ENCODE measurements at regions of chr2 and their contacts with region 1.

Region 1: DNA sequence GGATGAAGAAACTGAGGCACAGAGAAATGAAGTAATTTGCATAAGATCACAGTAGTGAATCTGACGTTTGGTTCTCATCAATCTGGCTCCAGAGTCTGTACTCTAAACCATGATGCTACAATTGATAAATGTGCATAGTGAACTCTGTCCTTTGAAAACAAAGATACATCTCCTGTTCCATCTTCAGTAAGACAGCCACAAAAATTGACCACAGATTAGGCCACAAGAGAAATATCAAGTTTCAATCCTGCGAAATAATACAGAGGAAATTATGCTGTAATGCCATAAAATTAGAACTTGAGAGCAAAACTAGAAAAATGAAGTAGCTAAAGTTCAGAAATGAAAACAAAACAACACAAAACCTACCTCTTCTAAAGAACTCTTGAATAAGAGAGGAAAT is 28.4 kb downstream of the FAM98A start:
- DNase-seq: no peak
- ATAC-seq: no peak
- H3K4me3 ChIP-seq: no peak overlapping the region
- H3K27ac ChIP-seq: no peak overlapping the region
- H3K4me1 ChIP-seq: no peaks in the 10 kb centered on the region
- H3K27me3 ChIP-seq: no peaks in the 10 kb centered on the region
- CTCF ChIP-seq: no peak
- POLR2A ChIP-seq: no peak
- RAD21 ChIP-seq: no peak

Region 2: GRCh38 chr2:33433279-33434235 is 137.1 kb before region 1 on chr2:
- CTCF ChIA-PET with region 1: interaction called, 3 read pairs
- POLR2A ChIA-PET with region 1: interaction called, 17 read pairs
- dilution Hi-C with region 1: no loop called
- in situ Hi-C with region 1: no loop called
- intact Hi-C with region 1: no loop called
- DNase-seq: no peak
- ATAC-seq: no peak
- H3K4me3 ChIP-seq: no peak overlapping the region
- H3K27ac ChIP-seq: no peak overlapping the region
- H3K4me1 ChIP-seq: peaks cover 14% of the 10 kb centered on the region
- H3K27me3 ChIP-seq: no peaks in the 10 kb centered on the region
- CTCF ChIP-seq: no peak
- POLR2A ChIP-seq: no peak
- RAD21 ChIP-seq: no peak